IMR-90 (cell line): ENCODE measurements at regions of chr2 and their contacts with region 1.

Region 1: GRCh38 chr2:203071148-203071547 is 56.5 kb downstream of the NBEAL1 start:
- DNase-seq: no peak
- ATAC-seq: no peak
- H3K4me3 ChIP-seq: no peak overlapping the region
- H3K27ac ChIP-seq: no peak overlapping the region
- H3K4me1 ChIP-seq: no peaks in the 10 kb centered on the region
- H3K27me3 ChIP-seq: no peaks in the 10 kb centered on the region
- CTCF ChIP-seq: no peak
- POLR2A ChIP-seq: no peak
- RAD21 ChIP-seq: no peak

Region 2: DNA sequence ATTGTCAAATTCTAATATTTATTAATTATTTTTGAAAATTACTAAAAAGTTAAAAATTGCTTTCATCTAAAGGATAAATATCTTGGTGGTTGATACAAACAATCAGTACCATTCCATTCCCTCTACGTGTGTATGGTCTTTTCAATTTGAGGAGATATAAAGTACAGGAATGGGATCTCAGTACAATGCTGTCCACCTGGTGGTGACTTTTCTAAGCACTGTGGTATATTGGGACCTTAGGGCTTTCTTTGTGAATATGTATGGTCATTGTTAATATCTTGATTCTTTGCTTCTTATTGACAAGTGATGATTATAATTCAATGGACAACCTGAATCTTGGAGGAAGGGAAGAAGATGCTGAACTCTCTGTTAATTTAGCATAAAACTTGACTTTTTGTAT is 26.6 kb after region 1 on chr2:
- CTCF ChIA-PET with region 1: interaction called, 10 read pairs
- POLR2A ChIA-PET with region 1: interaction called, 4 read pairs
- dilution Hi-C with region 1: no loop called
- in situ Hi-C with region 1: no loop called
- intact Hi-C with region 1: no loop called
- DNase-seq: peak; percentile 6
- ATAC-seq: no peak
- H3K4me3 ChIP-seq: no peak overlapping the region
- H3K27ac ChIP-seq: no peak overlapping the region
- H3K4me1 ChIP-seq: no peaks in the 10 kb centered on the region; the same call in 1 of the 2 replicates
- H3K27me3 ChIP-seq: no peaks in the 10 kb centered on the region
- CTCF ChIP-seq: 0 out of 2 replicates have a peak, but pooled peaks have one; percentile 13
- POLR2A ChIP-seq: no peak
- RAD21 ChIP-seq: 0 out of 2 replicates have a peak, but pooled peaks have one; percentile 16